ENCODE measurements at regions of chr1 and their contacts with region 1.

Region 1: GRCh38 chr1:34009340-34009985 is 145.6 kb downstream of the HMGB4 start:
- DNase-seq: no peak
- ATAC-seq: no peak
- H3K4me3 ChIP-seq: no peak overlapping the region
- H3K4me3 Mint-ChIP-seq: no peak overlapping the region
- H3K27ac ChIP-seq: no peak overlapping the region
- H3K27ac Mint-ChIP-seq: no peak overlapping the region
- H3K4me1 ChIP-seq: no peaks in the 10 kb centered on the region
- H3K4me1 Mint-ChIP-seq: no peaks in the 10 kb centered on the region
- H3K27me3 ChIP-seq: peaks cover 0 to 14% of the 10 kb centered on the region in 2 experiments
- H3K27me3 Mint-ChIP-seq: peaks cover 5 to 12% of the 10 kb centered on the region in 2 donors

Region 2: GRCh38 chr1:33984906-33985565 is 24.4 kb before region 1 on chr1:
- CTCF ChIA-PET with region 1: no interaction called
- POLR2A ChIA-PET with region 1: interaction called in 1 of 2 experiments, 12 read pairs
- DNase-seq: no peak
- ATAC-seq: no peak
- H3K4me3 ChIP-seq: no peak overlapping the region
- H3K4me3 Mint-ChIP-seq: no peak overlapping the region
- H3K27ac ChIP-seq: no peak overlapping the region
- H3K27ac Mint-ChIP-seq: no peak overlapping the region
- H3K4me1 ChIP-seq: no peaks in the 10 kb centered on the region
- H3K4me1 Mint-ChIP-seq: no peaks in the 10 kb centered on the region
- H3K27me3 ChIP-seq: peaks cover 0 to 9% of the 10 kb centered on the region in 2 experiments
- H3K27me3 Mint-ChIP-seq: peaks cover 25% of the 10 kb centered on the region in 2 donors

Region 3: DNA sequence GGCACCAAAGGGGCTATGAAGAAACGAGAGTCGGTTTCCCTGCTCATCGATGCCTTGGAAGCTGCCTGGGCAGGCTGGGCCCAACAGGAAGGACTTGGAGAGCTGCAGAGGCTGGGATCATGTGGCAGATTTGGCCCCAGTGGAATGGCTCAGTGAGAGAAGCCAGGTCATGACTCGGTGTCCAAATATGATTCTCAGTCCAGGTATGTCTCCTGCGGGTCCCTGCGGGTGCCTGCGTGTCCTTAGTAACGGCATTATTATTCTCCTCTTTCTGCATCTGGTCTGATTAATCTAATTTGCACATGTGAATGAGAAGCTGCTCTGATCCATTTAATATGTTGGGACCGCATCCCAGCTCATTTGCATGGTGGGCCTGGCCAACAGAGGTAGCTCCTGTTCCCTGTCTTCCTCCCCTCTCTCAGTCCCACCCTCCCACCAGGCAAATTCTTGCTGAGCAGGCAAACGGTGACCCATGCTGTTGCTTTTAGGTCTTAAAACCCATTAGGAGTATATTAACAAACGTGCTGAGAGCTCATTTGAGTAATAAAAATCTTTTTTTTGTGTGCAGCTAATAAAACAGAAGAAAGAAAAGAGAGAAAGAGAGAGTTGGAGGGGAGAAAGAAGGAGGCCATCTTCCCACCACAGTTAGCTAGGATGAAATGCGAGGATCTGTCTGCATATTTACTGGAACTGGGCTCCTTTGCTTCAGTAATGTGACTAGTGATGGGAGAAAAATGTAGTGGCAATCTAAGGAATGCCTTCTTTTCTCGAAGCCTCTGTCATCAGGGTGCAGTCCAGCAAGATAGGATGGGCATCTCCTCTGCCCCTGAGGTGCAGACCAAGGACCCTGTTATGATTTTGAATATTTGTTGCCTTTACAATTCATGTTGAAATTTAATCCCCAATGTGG is 12.1 kb before region 1 on chr1:
- CTCF ChIA-PET with region 1: no interaction called
- POLR2A ChIA-PET with region 1: no interaction called
- DNase-seq: no peak
- ATAC-seq: no peak
- H3K4me3 ChIP-seq: no peak overlapping the region
- H3K4me3 Mint-ChIP-seq: no peak overlapping the region
- H3K27ac ChIP-seq: no peak overlapping the region
- H3K27ac Mint-ChIP-seq: peak overlapping the region in 1 of 2 donors; percentile 12
- H3K4me1 ChIP-seq: no peaks in the 10 kb centered on the region
- H3K4me1 Mint-ChIP-seq: no peaks in the 10 kb centered on the region
- H3K27me3 ChIP-seq: peaks cover 0 to 7% of the 10 kb centered on the region in 2 experiments
- H3K27me3 Mint-ChIP-seq: peaks cover 5 to 14% of the 10 kb centered on the region in 2 donors

Region 4: GRCh38 chr1:34147301-34147700 is 137.8 kb after region 1 on chr1:
- CTCF ChIA-PET with region 1: no interaction called
- POLR2A ChIA-PET with region 1: no interaction called
- DNase-seq: no peak
- ATAC-seq: no peak
- H3K4me3 ChIP-seq: no peak overlapping the region
- H3K4me3 Mint-ChIP-seq: no peak overlapping the region
- H3K27ac ChIP-seq: no peak overlapping the region
- H3K27ac Mint-ChIP-seq: no peak overlapping the region
- H3K4me1 ChIP-seq: no peaks in the 10 kb centered on the region
- H3K4me1 Mint-ChIP-seq: no peaks in the 10 kb centered on the region
- H3K27me3 ChIP-seq: peaks cover 0 to 17% of the 10 kb centered on the region in 2 experiments
- H3K27me3 Mint-ChIP-seq: peaks cover 2 to 22% of the 10 kb centered on the region in 2 donors